Panc1 (cell line): ENCODE measurements at regions of chr19 and their contacts with region 1.

Region 1: DNA sequence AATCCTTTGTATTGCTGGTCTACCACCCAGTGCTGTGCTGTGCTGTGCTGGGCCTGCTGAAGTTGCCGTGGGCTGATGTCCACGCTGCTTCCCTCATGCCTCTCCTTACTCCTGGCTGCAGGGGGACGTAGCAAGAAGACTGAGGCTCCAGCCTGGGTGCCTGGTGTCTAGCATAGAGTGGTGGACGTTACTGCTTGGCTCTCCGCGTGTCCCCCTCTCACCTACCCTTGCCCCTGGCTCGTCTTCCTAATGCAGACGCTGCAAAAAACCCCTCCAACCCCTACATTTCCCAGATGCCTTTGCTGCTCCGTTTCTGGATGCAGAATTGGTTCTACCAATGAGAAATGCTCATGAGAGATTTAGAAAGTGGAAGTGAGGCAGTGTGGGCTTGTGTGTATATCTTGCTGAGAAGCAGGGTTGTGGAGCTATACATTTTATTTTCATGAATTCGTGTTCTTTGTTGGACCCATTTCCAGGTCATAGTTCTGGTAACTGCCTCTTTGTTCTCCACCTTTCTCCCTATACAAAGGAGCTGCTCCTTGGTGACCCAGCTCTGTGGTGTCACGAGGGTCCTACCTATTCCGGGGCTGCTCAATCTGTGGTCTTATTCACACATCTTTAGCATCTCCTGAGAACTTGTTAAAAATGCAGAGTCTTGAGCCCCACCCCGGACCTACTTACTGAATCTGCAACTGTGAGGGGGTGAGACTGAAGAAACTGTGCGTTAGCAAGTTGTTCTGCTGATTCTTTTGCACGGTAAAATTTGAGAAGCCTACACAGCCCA is 7.9 kb upstream of the DENND1C start:
- DNase-seq: no peak
- ATAC-seq: no peak
- H3K4me3 ChIP-seq: no peak overlapping the region
- H3K27ac ChIP-seq: no peak overlapping the region
- H3K4me1 ChIP-seq: no peaks in the 10 kb centered on the region
- H3K27me3 ChIP-seq: no peaks in the 10 kb centered on the region
- CTCF ChIP-seq: no peak

Region 2: DNA sequence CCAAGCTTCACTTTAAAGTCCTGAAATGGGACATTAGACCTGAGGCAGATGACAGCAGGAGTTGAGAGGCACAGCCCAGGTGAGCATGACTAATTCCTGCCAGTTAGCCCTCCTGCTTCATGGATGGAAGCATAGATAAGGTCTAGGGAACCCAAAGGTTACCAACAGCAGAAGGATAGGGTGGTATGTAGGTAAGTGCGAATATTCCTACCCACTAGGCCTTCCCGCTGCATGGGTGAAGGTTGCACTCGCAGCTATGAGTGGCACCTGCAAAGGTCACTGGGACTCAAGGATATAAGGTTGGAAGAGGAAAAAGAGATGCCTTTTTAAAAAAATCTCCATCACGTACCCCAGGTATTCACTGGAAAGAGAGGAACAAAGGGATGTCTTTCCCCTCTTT is 197.5 kb before region 1 on chr19:
- CTCF ChIA-PET with region 1: no interaction called
- POLR2A ChIA-PET with region 1: no interaction called
- in situ Hi-C with region 1: no loop called
- intact Hi-C with region 1: no loop called
- DNase-seq: no peak
- ATAC-seq: no peak
- H3K4me3 ChIP-seq: no peak overlapping the region
- H3K27ac ChIP-seq: no peak overlapping the region
- H3K4me1 ChIP-seq: no peaks in the 10 kb centered on the region
- H3K27me3 ChIP-seq: no peaks in the 10 kb centered on the region
- CTCF ChIP-seq: no peak

Region 3: GRCh38 chr19:6393074-6393983 is 96.1 kb before region 1 on chr19 and contains the start of gene GTF2F1:
- CTCF ChIA-PET with region 1: no interaction called
- POLR2A ChIA-PET with region 1: no interaction called
- in situ Hi-C with region 1: no loop called
- intact Hi-C with region 1: no loop called
- DNase-seq: peak; percentile 75
- ATAC-seq: peak; percentile 94
- H3K4me3 ChIP-seq: peak within 1 kb of the TSS; percentile 80 to 94
- H3K27ac ChIP-seq: peak within 1 kb of the TSS; percentile 93
- H3K4me1 ChIP-seq: peaks cover 7% of the 10 kb centered on the region; the same call in 1 of the 2 replicates
- H3K27me3 ChIP-seq: no peaks in the 10 kb centered on the region
- CTCF ChIP-seq: no peak
- total RNA-seq, gene GTF2F1: 61.1 TPM

Region 4: GRCh38 chr19:6429419-6430221 is 59.9 kb before region 1 on chr19:
- CTCF ChIA-PET with region 1: no interaction called
- POLR2A ChIA-PET with region 1: no interaction called
- in situ Hi-C with region 1: no loop called
- intact Hi-C with region 1: no loop called
- DNase-seq: no peak
- ATAC-seq: no peak
- H3K4me3 ChIP-seq: no peak overlapping the region
- H3K27ac ChIP-seq: no peak overlapping the region
- H3K4me1 ChIP-seq: peaks cover 4% of the 10 kb centered on the region; the same call in 1 of the 2 replicates
- H3K27me3 ChIP-seq: no peaks in the 10 kb centered on the region
- CTCF ChIP-seq: no peak

Region 5: DNA sequence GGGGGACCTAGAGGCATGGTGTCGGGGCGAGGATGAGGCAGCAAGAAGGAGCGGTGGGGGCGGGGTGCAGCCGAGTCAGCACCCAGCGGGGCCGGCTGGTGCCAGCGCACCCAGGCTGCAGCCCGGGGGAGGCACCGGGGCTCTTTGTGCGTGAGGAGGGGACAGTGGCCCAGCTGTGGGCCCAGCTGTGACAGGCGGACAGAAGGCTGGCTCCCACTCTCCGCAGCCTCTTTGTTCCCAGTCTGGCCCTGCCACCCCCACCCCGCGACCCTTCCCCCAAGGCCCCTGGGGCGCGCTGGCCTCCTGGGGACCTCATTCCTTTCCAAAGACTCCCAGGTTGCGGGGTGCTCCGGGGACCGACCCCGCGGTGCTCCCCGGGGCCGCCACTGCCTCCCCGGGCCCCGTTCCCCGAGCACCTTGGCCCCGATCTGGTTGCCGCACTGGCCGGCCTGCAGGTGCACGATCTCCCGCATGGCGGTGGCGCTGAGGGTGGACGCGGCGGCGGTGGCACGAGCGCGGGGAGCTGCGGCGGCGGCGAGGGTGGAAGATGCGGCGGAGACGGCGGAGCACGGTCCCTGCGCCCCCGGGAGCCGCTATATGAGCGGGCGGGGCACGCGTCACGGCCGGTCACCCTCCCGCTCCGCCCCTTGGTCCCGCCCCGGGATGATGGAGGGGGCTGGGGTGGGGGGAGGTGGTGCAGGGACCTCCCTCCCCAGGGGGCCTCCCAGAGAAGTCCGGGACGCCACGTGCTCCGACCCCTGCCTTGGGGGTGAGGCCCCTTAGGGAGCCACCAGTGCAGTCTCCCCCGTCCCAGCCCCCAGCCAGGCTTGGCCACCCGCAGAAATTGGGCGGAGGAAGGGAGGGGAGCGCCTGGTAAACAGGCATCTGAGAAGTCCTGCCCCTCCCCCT is 12.5 kb after region 1 on chr19 and contains the start of gene TUBB4A:
- CTCF ChIA-PET with region 1: no interaction called
- POLR2A ChIA-PET with region 1: interaction called, 10 read pairs
- in situ Hi-C with region 1: no loop called
- intact Hi-C with region 1: no loop called
- DNase-seq: no peak
- ATAC-seq: peak; percentile 67
- H3K4me3 ChIP-seq: peak within 1 kb of the TSS; percentile 37 to 49
- H3K27ac ChIP-seq: no peak within 1 kb of the TSS
- H3K4me1 ChIP-seq: peaks cover 2% of the 10 kb centered on the region; the same call in 1 of the 2 replicates
- H3K27me3 ChIP-seq: no peaks in the 10 kb centered on the region; the same call in 1 of the 2 replicates
- CTCF ChIP-seq: no peak
- total RNA-seq, gene TUBB4A: 4.4 TPM